ENCODE measurements at regions of chrX and their contacts with region 1.

Region 1: GRCh38 chrX:12974796-12975669 is at the start of gene TMSB4X:
- DNase-seq: peak; percentile 83 to 85
- H3K4me3 ChIP-seq: peak within 1 kb of the TSS; percentile 67
- H3K4me3 Mint-ChIP-seq: peak within 1 kb of the TSS; percentile 97
- H3K27ac Mint-ChIP-seq: peak within 1 kb of the TSS; percentile 94
- H3K4me1 ChIP-seq: peaks cover 10% of the 10 kb centered on the region
- H3K4me1 Mint-ChIP-seq: peaks cover 10% of the 10 kb centered on the region
- H3K27me3 ChIP-seq: no peaks in the 10 kb centered on the region
- H3K27me3 Mint-ChIP-seq: no peaks in the 10 kb centered on the region
- CTCF ChIP-seq: no peak
- total RNA-seq, gene TMSB4X: 1,007 and 1,095 TPM in 2 replicates

Region 2: GRCh38 chrX:12955882-12956703 is 18.9 kb before region 1 on chrX:
- CTCF ChIA-PET with region 1: no interaction called
- POLR2A ChIA-PET with region 1: no interaction called
- intact Hi-C with region 1: no loop called
- DNase-seq: peak in 1 of 2 experiments; percentile 41
- H3K4me3 ChIP-seq: no peak overlapping the region
- H3K4me3 Mint-ChIP-seq: no peak overlapping the region
- H3K27ac Mint-ChIP-seq: peak overlapping the region; percentile 53
- H3K4me1 ChIP-seq: 0 out of 2 replicates have a peak, but pooled peaks cover 6% of the 10 kb centered on the region
- H3K4me1 Mint-ChIP-seq: no peaks in the 10 kb centered on the region
- H3K27me3 ChIP-seq: no peaks in the 10 kb centered on the region
- H3K27me3 Mint-ChIP-seq: no peaks in the 10 kb centered on the region
- CTCF ChIP-seq: no peak

Region 3: DNA sequence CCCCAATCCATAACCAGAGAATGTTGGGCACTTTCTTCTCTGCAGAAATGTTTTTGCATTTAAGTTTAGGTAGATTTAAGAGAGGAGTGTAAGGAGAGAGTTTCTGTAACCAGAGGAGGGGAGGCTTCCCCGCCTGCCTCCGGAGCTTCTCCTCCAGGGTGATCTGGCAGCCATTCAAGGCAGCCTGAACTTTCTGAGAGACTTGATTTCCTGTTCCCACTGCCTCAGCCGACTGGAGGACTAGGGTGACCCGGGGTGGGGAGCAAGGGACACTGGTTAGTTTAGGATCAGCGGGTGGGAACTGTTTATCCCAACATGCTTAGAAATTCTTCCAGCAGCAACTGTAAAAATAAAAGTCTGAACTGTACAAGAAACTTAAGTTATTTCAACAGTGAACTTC is 54.3 kb after region 1 on chrX:
- CTCF ChIA-PET with region 1: no interaction called
- POLR2A ChIA-PET with region 1: interaction called, 3 read pairs
- intact Hi-C with region 1: loop called (anchors 1 kb)
- DNase-seq: peak in 1 of 2 experiments; percentile 42
- H3K4me3 ChIP-seq: no peak overlapping the region
- H3K4me3 Mint-ChIP-seq: peak overlapping the region; percentile 62
- H3K27ac Mint-ChIP-seq: peak overlapping the region; percentile 96
- H3K4me1 ChIP-seq: peaks cover 58% of the 10 kb centered on the region
- H3K4me1 Mint-ChIP-seq: peaks cover 44% of the 10 kb centered on the region
- H3K27me3 ChIP-seq: no peaks in the 10 kb centered on the region
- H3K27me3 Mint-ChIP-seq: no peaks in the 10 kb centered on the region
- CTCF ChIP-seq: no peak

Region 4: GRCh38 chrX:13283950-13284914 is 309.2 kb after region 1 on chrX:
- CTCF ChIA-PET with region 1: no interaction called
- POLR2A ChIA-PET with region 1: no interaction called
- intact Hi-C with region 1: loop called (anchors 10 kb)
- DNase-seq: no peak
- H3K4me3 ChIP-seq: no peak overlapping the region
- H3K4me3 Mint-ChIP-seq: no peak overlapping the region
- H3K27ac Mint-ChIP-seq: no peak overlapping the region
- H3K4me1 ChIP-seq: peaks cover 27% of the 10 kb centered on the region
- H3K4me1 Mint-ChIP-seq: peaks cover 9% of the 10 kb centered on the region
- H3K27me3 ChIP-seq: no peaks in the 10 kb centered on the region
- H3K27me3 Mint-ChIP-seq: no peaks in the 10 kb centered on the region
- CTCF ChIP-seq: no peak

Region 5: DNA sequence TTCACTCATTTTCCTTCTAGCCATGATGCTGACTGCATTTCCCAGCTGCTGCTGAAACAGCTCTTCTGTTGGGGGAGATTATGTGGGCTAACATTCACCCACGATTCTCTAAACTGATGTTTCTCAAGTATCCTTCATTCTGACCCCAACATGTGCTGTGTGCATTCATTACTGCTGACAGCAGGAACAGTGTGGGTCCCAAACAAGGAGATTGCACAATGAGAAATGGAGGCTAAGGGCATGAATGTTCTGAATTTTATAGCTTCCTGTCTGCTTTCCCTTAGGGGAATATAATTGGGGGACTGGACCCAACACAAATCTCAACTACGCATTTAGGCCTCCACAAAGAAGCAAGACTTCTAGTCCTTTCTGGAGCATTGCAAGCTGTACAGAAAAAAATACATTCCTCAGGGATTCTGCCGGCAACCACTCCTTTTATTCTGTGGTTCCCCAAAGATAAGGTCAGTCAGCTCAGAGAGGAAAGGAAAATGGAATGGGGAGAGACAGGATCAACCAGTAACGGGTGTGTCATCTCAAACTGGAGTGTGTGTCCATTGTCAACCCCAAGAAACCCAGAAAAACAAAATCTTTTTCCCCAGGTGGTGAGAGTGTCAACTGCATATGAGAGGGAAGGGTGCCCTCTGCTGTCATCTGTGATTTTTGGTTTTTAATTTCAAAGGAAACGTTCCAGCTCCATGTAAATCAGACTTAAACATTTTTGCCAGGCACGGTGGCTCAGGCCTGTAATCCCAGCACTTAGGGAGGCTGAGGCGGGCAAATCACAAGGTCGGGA is 512.9 kb after region 1 on chrX:
- CTCF ChIA-PET with region 1: interaction called, 5 read pairs
- POLR2A ChIA-PET with region 1: interaction called, 8 read pairs
- intact Hi-C with region 1: loop called (anchors 1 kb)
- DNase-seq: peak; percentile 68 to 75
- H3K4me3 ChIP-seq: no peak overlapping the region
- H3K4me3 Mint-ChIP-seq: peak overlapping the region; percentile 14
- H3K27ac Mint-ChIP-seq: peak overlapping the region; percentile 90
- H3K4me1 ChIP-seq: peaks cover 25% of the 10 kb centered on the region
- H3K4me1 Mint-ChIP-seq: peaks cover 6% of the 10 kb centered on the region
- H3K27me3 ChIP-seq: no peaks in the 10 kb centered on the region
- H3K27me3 Mint-ChIP-seq: no peaks in the 10 kb centered on the region
- CTCF ChIP-seq: peak; percentile 40 to 53